T-cell (primary cell): ENCODE measurements at regions of chr12 and their contacts with region 1.

Region 1: GRCh38 chr12:738712-739111 is 13.7 kb upstream of the WNK1 start:
- DNase-seq: no peak
- ATAC-seq: no peak
- H3K4me3 ChIP-seq: no peak overlapping the region
- H3K4me3 Mint-ChIP-seq: no peak overlapping the region
- H3K27ac ChIP-seq: no peak overlapping the region
- H3K27ac Mint-ChIP-seq: no peak overlapping the region
- H3K4me1 ChIP-seq: peaks cover 6% of the 10 kb centered on the region in 2 experiments
- H3K4me1 Mint-ChIP-seq: peaks cover 5 to 7% (median 7%) of the 10 kb centered on the region in 3 donors
- H3K27me3 ChIP-seq: no peaks in the 10 kb centered on the region
- H3K27me3 Mint-ChIP-seq: no peaks in the 10 kb centered on the region

Region 2: DNA sequence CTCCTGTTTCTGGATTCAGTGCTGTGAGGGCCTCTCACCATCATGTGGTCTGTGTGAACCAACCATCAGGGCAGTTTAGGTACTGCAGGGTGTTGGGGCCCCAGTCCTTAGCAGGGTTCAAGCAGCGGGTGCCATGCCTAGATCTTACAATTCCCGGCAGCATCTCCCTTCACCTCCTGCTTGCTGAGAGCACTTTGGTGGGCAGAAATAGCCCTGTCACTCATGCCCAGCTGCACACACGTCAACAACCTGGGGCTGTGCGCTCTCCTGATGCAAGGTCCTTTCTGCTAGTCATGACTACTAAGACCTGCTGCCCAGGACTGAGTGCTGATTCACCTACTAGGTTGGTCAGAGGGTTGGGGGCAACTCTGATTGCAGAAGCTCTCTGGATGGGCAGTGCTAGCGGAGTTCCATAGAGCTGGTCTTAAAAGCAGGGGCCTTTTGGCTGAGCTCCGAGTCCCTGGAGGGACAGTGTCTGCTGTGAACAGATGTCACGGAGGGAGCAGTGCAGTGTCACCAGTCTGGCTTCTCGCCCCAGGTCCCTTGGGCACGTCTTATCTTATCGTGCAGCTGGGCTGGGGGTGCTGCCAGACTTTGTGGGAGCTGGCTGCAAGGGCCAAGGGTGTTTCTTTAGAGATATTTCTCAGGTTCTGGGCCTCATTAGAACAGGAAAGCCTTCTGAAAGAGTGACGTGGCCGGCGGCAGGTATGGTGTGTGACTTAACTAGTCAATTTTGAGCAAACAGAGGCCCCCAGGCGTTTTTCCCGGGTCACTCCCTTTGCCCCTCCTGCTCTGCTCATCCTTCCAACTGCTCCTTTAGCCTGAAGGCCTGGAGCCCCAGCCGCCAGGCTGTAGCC is 147.3 kb before region 1 on chr12:
- CTCF ChIA-PET with region 1: no interaction called
- POLR2A ChIA-PET with region 1: interaction called in 1 of 2 experiments, 11 read pairs
- DNase-seq: no peak
- ATAC-seq: peak in 1 of 4 experiments; percentile 32
- H3K4me3 ChIP-seq: no peak overlapping the region
- H3K4me3 Mint-ChIP-seq: no peak overlapping the region
- H3K27ac ChIP-seq: no peak overlapping the region
- H3K27ac Mint-ChIP-seq: no peak overlapping the region
- H3K4me1 ChIP-seq: no peaks in the 10 kb centered on the region
- H3K4me1 Mint-ChIP-seq: no peaks in the 10 kb centered on the region
- H3K27me3 ChIP-seq: peaks cover 0 to under 1% of the 10 kb centered on the region in 2 experiments
- H3K27me3 Mint-ChIP-seq: no peaks in the 10 kb centered on the region

Region 3: GRCh38 chr12:712172-712863 is 26.4 kb before region 1 on chr12:
- CTCF ChIA-PET with region 1: no interaction called
- POLR2A ChIA-PET with region 1: no interaction called
- DNase-seq: no peak
- ATAC-seq: no peak
- H3K4me3 ChIP-seq: no peak overlapping the region
- H3K4me3 Mint-ChIP-seq: no peak overlapping the region
- H3K27ac ChIP-seq: no peak overlapping the region
- H3K27ac Mint-ChIP-seq: no peak overlapping the region
- H3K4me1 ChIP-seq: peaks cover 0 to 6% of the 10 kb centered on the region in 2 experiments
- H3K4me1 Mint-ChIP-seq: peaks cover 5 to 8% (median 8%) of the 10 kb centered on the region in 3 donors
- H3K27me3 ChIP-seq: no peaks in the 10 kb centered on the region
- H3K27me3 Mint-ChIP-seq: no peaks in the 10 kb centered on the region

Region 4: GRCh38 chr12:1453810-1454209 is 715.1 kb after region 1 on chr12:
- CTCF ChIA-PET with region 1: no interaction called
- POLR2A ChIA-PET with region 1: no interaction called
- DNase-seq: no peak
- ATAC-seq: no peak
- H3K4me3 ChIP-seq: no peak overlapping the region
- H3K4me3 Mint-ChIP-seq: no peak overlapping the region
- H3K27ac ChIP-seq: no peak overlapping the region
- H3K27ac Mint-ChIP-seq: no peak overlapping the region
- H3K4me1 ChIP-seq: no peaks in the 10 kb centered on the region
- H3K4me1 Mint-ChIP-seq: no peaks in the 10 kb centered on the region
- H3K27me3 ChIP-seq: no peaks in the 10 kb centered on the region
- H3K27me3 Mint-ChIP-seq: no peaks in the 10 kb centered on the region